Natural killer cell (primary cell): ENCODE measurements at regions of chr19 and their contacts with region 1.

Region 1: GRCh38 chr19:19488875-19489690 is 26.3 kb downstream of the TSSK6 start:
- DNase-seq: peak; percentile 85 to 98
- ATAC-seq: peak; percentile 84 to 86 (median 86)
- H3K4me3 ChIP-seq: no peak overlapping the region
- H3K4me3 Mint-ChIP-seq: peak overlapping the region; percentile 85
- H3K27ac ChIP-seq: peak overlapping the region; percentile 94
- H3K27ac Mint-ChIP-seq: peak overlapping the region; percentile 97 to 98
- H3K4me1 ChIP-seq: peaks cover 60% of the 10 kb centered on the region
- H3K4me1 Mint-ChIP-seq: peaks cover 43 to 50% of the 10 kb centered on the region in 2 donors
- H3K27me3 ChIP-seq: no peaks in the 10 kb centered on the region
- H3K27me3 Mint-ChIP-seq: no peaks in the 10 kb centered on the region
- CTCF ChIP-seq: no peak

Region 2: GRCh38 chr19:19145684-19146608 is 343.1 kb before region 1 on chr19:
- intact Hi-C with region 1: loop called (anchors 1 kb)
- DNase-seq: peak; percentile 84 to 88
- ATAC-seq: peak; percentile 85 to 99 (median 94)
- H3K4me3 ChIP-seq: no peak overlapping the region
- H3K4me3 Mint-ChIP-seq: no peak overlapping the region
- H3K27ac ChIP-seq: no peak overlapping the region
- H3K27ac Mint-ChIP-seq: peak overlapping the region in 1 of 2 donors; percentile 38
- H3K4me1 ChIP-seq: peaks cover 8% of the 10 kb centered on the region
- H3K4me1 Mint-ChIP-seq: peaks cover 0 to 5% of the 10 kb centered on the region in 2 donors
- H3K27me3 ChIP-seq: no peaks in the 10 kb centered on the region
- H3K27me3 Mint-ChIP-seq: no peaks in the 10 kb centered on the region
- CTCF ChIP-seq: peak; percentile 77

Region 3: DNA sequence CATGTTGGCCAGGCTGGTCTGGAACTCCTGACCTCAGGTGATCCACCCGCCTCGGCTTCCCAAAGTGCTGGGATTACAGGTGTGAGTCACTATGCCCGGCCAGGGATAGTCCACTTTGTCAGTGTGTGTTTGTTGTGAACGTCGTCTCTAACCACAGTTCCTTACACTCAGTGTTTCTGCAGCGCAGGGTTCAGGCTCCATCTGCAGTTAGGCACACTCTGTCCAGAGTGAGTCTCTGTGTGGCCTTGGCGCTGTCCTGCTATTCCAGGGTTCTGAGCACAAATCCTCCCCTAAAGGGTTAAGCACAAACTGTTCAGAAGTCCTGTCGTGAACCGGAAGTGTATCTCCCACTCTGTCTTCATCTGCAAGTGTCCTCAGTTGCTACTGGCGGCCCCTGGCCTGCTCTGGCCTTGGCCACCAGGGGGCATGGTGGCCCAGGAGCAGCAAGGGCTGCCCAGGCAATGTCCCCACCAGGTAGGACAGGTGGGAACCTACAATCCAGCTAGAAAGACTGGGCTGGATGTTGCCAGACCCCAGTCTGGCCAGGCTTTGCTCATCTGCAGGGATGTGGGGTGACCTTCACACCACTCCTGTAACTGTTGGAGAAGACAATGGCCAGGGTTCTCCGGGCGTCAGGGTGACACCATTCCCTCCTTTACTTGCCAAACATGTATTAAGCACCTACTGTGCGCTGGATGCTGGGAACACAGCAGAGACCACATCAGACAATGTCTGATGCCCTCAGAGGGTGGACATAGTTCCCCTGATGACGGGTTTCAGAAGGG is 122.3 kb before region 1 on chr19:
- intact Hi-C with region 1: loop called (anchors 1 kb)
- DNase-seq: peak; percentile 58 to 86
- ATAC-seq: peak; percentile 78 to 83 (median 79)
- H3K4me3 ChIP-seq: no peak overlapping the region
- H3K4me3 Mint-ChIP-seq: peak overlapping the region; percentile 62
- H3K27ac ChIP-seq: no peak overlapping the region
- H3K27ac Mint-ChIP-seq: peak overlapping the region; percentile 46 to 59
- H3K4me1 ChIP-seq: peaks cover 29% of the 10 kb centered on the region
- H3K4me1 Mint-ChIP-seq: peaks cover 8 to 17% of the 10 kb centered on the region in 2 donors
- H3K27me3 ChIP-seq: no peaks in the 10 kb centered on the region
- H3K27me3 Mint-ChIP-seq: no peaks in the 10 kb centered on the region
- CTCF ChIP-seq: peak; percentile 95

Region 4: GRCh38 chr19:19385108-19385899 is 103.8 kb before region 1 on chr19:
- intact Hi-C with region 1: loop called (anchors 1 kb)
- DNase-seq: peak; percentile 99
- ATAC-seq: peak; percentile 83 to 94 (median 85)
- H3K4me3 ChIP-seq: peak overlapping the region; percentile 58
- H3K4me3 Mint-ChIP-seq: peak overlapping the region; percentile 89
- H3K27ac ChIP-seq: peak overlapping the region; percentile 90
- H3K27ac Mint-ChIP-seq: peak overlapping the region; percentile 98 to 100
- H3K4me1 ChIP-seq: peaks cover 46% of the 10 kb centered on the region
- H3K4me1 Mint-ChIP-seq: peaks cover 42 to 48% of the 10 kb centered on the region in 2 donors
- H3K27me3 ChIP-seq: no peaks in the 10 kb centered on the region
- H3K27me3 Mint-ChIP-seq: no peaks in the 10 kb centered on the region
- CTCF ChIP-seq: no peak

Region 5: DNA sequence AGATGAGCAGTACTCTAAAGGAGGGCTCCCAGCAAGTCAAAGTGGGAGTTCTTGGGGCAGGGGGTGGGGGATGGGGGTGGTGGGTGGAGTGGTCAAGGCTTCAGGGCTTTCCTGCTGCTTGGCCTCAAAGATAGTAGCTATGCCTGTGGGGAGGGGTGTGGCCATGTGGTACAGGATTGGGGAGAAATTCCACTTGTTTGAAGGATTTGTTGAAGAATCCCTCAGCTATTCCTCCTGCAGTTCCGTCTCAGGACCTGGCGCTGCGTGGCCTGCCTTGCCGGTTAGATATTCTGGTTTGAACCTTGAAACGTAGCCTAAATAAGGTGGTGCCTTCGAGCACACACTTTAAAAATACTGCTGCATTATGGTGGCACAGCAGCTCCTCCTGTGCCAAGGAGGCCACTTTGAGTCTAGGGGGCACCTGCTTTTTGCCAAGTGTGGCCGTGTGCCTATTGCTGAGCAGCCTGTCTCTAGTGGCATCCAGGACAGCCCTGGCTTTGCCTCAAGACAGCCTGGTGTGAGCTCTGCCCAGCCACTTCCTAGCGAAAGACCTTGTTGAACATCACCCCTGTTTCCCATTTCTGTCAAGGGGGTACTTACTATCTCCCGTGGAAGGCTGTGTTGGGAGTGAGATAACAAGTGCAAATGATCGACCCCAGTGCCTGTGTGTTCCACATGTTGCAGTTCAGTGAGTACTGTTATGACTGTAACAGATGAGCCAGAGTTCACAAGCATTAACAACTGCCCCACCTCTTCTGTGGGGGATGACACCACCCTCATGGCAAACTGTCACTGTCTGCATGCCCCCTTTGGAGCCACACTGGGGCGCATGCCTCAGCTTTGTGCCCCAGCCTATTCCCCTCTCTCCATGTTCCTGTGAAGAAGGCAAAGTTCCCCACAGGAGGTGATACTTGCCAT is 78.5 kb before region 1 on chr19:
- intact Hi-C with region 1: loop called (anchors 1 kb)
- DNase-seq: peak; percentile 49 to 58
- ATAC-seq: peak; percentile 67 to 82 (median 74)
- H3K4me3 ChIP-seq: no peak overlapping the region
- H3K4me3 Mint-ChIP-seq: peak overlapping the region; percentile 86
- H3K27ac ChIP-seq: peak overlapping the region; percentile 59
- H3K27ac Mint-ChIP-seq: peak overlapping the region; percentile 89 to 90
- H3K4me1 ChIP-seq: peaks cover 67% of the 10 kb centered on the region
- H3K4me1 Mint-ChIP-seq: peaks cover 73 to 75% of the 10 kb centered on the region in 2 donors
- H3K27me3 ChIP-seq: no peaks in the 10 kb centered on the region
- H3K27me3 Mint-ChIP-seq: no peaks in the 10 kb centered on the region
- CTCF ChIP-seq: peak; percentile 21

Region 6: GRCh38 chr19:19451429-19452242 is 37.4 kb before region 1 on chr19:
- intact Hi-C with region 1: loop called (anchors 5 kb)
- DNase-seq: peak in 1 of 2 donors; percentile 80
- ATAC-seq: peak; percentile 66 to 84 (median 79)
- H3K4me3 ChIP-seq: no peak overlapping the region
- H3K4me3 Mint-ChIP-seq: peak overlapping the region; percentile 97
- H3K27ac ChIP-seq: peak overlapping the region; percentile 72
- H3K27ac Mint-ChIP-seq: peak overlapping the region; percentile 95 to 98
- H3K4me1 ChIP-seq: peaks cover 94% of the 10 kb centered on the region
- H3K4me1 Mint-ChIP-seq: peaks cover 60 to 65% of the 10 kb centered on the region in 2 donors
- H3K27me3 ChIP-seq: no peaks in the 10 kb centered on the region
- H3K27me3 Mint-ChIP-seq: no peaks in the 10 kb centered on the region
- CTCF ChIP-seq: no peak

Region 7: GRCh38 chr19:19526581-19527370 is 37.7 kb after region 1 on chr19:
- intact Hi-C with region 1: no loop called
- DNase-seq: no peak
- ATAC-seq: no peak
- H3K4me3 ChIP-seq: no peak overlapping the region
- H3K4me3 Mint-ChIP-seq: no peak overlapping the region
- H3K27ac ChIP-seq: no peak overlapping the region
- H3K27ac Mint-ChIP-seq: no peak overlapping the region
- H3K4me1 ChIP-seq: no peaks in the 10 kb centered on the region
- H3K4me1 Mint-ChIP-seq: peaks cover 0 to 10% of the 10 kb centered on the region in 2 donors
- H3K27me3 ChIP-seq: no peaks in the 10 kb centered on the region
- H3K27me3 Mint-ChIP-seq: no peaks in the 10 kb centered on the region
- CTCF ChIP-seq: no peak